Activated B cell treated with CpG ODN at 0.5 μM for 24 hours (primary cell): ENCODE measurements at regions of chr2 and their contacts with region 1.

Region 1: DNA sequence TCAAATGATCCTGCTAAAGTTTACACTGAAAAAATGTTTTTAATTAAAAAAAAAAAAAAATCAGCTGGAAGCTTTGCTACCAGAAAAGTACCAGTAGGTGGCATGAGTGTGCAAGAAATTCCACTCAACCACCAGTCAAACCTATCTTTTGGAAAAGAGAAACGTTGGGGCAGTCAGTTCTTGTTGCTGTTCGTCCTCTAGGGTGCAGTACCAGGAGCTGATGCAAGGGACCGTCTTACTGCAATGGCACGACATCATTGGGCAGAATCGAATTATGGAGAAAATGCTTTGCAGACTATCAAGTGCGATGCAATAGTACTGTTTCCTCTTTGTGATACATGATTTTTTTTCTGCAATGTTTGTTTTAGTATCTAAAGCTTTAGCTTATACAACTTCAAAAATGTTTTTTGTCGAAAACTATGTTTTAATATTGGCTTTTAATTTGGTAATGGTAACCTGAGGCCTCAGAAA is 18.3 kb downstream of the YPEL5 start:
- DNase-seq: no peak
- ATAC-seq: peak; percentile 100
- H3K4me3 Mint-ChIP-seq: no peak overlapping the region
- H3K27ac Mint-ChIP-seq: no peak overlapping the region
- H3K4me1 Mint-ChIP-seq: peaks cover 21% of the 10 kb centered on the region
- H3K27me3 Mint-ChIP-seq: no peaks in the 10 kb centered on the region
- CTCF ChIP-seq: peak; percentile 45

Region 2: GRCh38 chr2:30095402-30095801 is 69.7 kb before region 1 on chr2:
- CTCF ChIA-PET with region 1: interaction called, 13 read pairs
- POLR2A ChIA-PET with region 1: no interaction called
- intact Hi-C with region 1: loop called (anchors 1 kb)
- DNase-seq: no peak
- ATAC-seq: no peak
- H3K4me3 Mint-ChIP-seq: no peak overlapping the region
- H3K27ac Mint-ChIP-seq: no peak overlapping the region
- H3K4me1 Mint-ChIP-seq: no peaks in the 10 kb centered on the region
- H3K27me3 Mint-ChIP-seq: peaks cover 21% of the 10 kb centered on the region
- CTCF ChIP-seq: no peak

Region 3: GRCh38 chr2:30208452-30208851 is 43.4 kb after region 1 on chr2:
- CTCF ChIA-PET with region 1: interaction called, 79 read pairs
- POLR2A ChIA-PET with region 1: interaction called, 11 read pairs
- intact Hi-C with region 1: loop called (anchors 1 kb)
- DNase-seq: no peak
- ATAC-seq: peak; percentile 62
- H3K4me3 Mint-ChIP-seq: no peak overlapping the region
- H3K27ac Mint-ChIP-seq: peak overlapping the region; percentile 20
- H3K4me1 Mint-ChIP-seq: peaks cover 18% of the 10 kb centered on the region
- H3K27me3 Mint-ChIP-seq: no peaks in the 10 kb centered on the region
- CTCF ChIP-seq: peak; percentile 82

Region 4: DNA sequence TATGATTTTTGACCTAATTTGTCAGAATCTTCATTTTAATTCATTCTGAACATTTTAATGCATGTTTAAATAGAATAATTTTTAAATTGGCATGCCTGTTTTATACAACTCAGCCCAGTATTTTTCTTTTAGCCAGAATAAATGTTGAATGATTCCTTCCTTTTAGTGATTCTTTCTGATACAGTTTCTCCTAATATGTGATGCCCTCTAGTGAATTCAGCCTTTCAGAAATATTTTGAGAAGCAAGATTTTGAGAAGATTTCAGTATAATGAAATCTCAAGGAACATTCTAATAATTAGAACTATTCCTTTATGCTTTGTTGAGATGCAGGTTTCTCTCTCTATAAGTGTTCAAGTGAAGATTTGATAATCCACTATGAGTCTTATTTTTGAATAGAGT is 310.5 kb after region 1 on chr2:
- CTCF ChIA-PET with region 1: interaction called, 35 read pairs
- POLR2A ChIA-PET with region 1: no interaction called
- intact Hi-C with region 1: loop called (anchors 1 kb)
- DNase-seq: no peak
- ATAC-seq: no peak
- H3K4me3 Mint-ChIP-seq: no peak overlapping the region
- H3K27ac Mint-ChIP-seq: no peak overlapping the region
- H3K4me1 Mint-ChIP-seq: peaks cover 37% of the 10 kb centered on the region
- H3K27me3 Mint-ChIP-seq: no peaks in the 10 kb centered on the region
- CTCF ChIP-seq: no peak

Region 5: GRCh38 chr2:30862054-30862651 is 697.1 kb after region 1 on chr2:
- CTCF ChIA-PET with region 1: interaction called, 5 read pairs
- POLR2A ChIA-PET with region 1: no interaction called
- intact Hi-C with region 1: loop called (anchors 10 kb)
- DNase-seq: no peak
- ATAC-seq: peak; percentile 76
- H3K4me3 Mint-ChIP-seq: no peak overlapping the region
- H3K27ac Mint-ChIP-seq: no peak overlapping the region
- H3K4me1 Mint-ChIP-seq: peaks cover 18% of the 10 kb centered on the region
- H3K27me3 Mint-ChIP-seq: peaks cover 2% of the 10 kb centered on the region
- CTCF ChIP-seq: no peak

Region 6: GRCh38 chr2:31523871-31524492 is 1358.9 kb after region 1 on chr2:
- CTCF ChIA-PET with region 1: interaction called, 3 read pairs
- POLR2A ChIA-PET with region 1: no interaction called
- intact Hi-C with region 1: loop called (anchors 10 kb)
- DNase-seq: no peak
- ATAC-seq: no peak
- H3K4me3 Mint-ChIP-seq: no peak overlapping the region
- H3K27ac Mint-ChIP-seq: no peak overlapping the region
- H3K4me1 Mint-ChIP-seq: no peaks in the 10 kb centered on the region
- H3K27me3 Mint-ChIP-seq: peaks cover 30% of the 10 kb centered on the region
- CTCF ChIP-seq: peak; percentile 21